ENCODE measurements at regions of chr22 and their contacts with region 1.

Region 1: GRCh38 chr22:17684245-17684644 is 45.7 kb downstream of the BCL2L13 start:
- DNase-seq: no peak
- ATAC-seq: no peak
- H3K4me3 ChIP-seq: no peak overlapping the region
- H3K27ac ChIP-seq: no peak overlapping the region
- H3K4me1 ChIP-seq: no peaks in the 10 kb centered on the region
- H3K27me3 ChIP-seq: no peaks in the 10 kb centered on the region
- CTCF ChIP-seq: no peak

Region 2: GRCh38 chr22:17559188-17559587 is 125.1 kb before region 1 on chr22:
- CTCF ChIA-PET with region 1: interaction called, 10 read pairs
- POLR2A ChIA-PET with region 1: no interaction called
- in situ Hi-C with region 1: no loop called
- intact Hi-C with region 1: no loop called
- DNase-seq: no peak
- ATAC-seq: no peak
- H3K4me3 ChIP-seq: no peak overlapping the region
- H3K27ac ChIP-seq: no peak overlapping the region
- H3K4me1 ChIP-seq: peaks cover 10% of the 10 kb centered on the region
- H3K27me3 ChIP-seq: no peaks in the 10 kb centered on the region
- CTCF ChIP-seq: no peak

Region 3: DNA sequence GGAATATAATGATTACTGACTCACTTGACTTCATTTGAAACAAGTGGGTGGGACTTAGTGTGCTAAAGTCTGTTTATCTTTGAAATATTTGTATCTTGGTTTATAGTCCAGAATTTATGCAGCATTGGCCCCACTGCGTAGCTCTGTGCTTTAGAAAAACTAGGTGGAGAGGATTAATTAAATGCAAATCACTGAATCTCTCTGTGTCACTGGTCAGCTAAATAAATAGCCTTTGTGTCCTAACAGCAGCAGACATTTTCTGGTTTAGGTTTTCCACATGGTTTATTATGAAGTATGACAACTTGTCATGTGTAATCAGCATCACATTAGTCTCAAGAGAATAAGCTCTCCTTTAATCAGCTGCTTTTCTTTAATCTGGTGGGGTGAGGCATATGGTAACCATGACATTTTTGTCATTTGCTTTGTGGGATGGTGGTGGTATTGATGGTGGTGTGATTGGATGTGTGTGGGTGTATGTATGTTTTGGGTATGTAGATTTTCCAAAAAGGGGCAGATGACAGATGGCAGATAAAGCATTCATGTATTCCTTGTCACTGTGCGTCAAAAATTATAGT is 11.7 kb before region 1 on chr22:
- CTCF ChIA-PET with region 1: interaction called, 10 read pairs
- POLR2A ChIA-PET with region 1: no interaction called
- in situ Hi-C with region 1: no loop called
- intact Hi-C with region 1: no loop called
- DNase-seq: no peak
- ATAC-seq: no peak
- H3K4me3 ChIP-seq: no peak overlapping the region
- H3K27ac ChIP-seq: no peak overlapping the region
- H3K4me1 ChIP-seq: 0 out of 2 replicates have a peak, but pooled peaks cover 5% of the 10 kb centered on the region
- H3K27me3 ChIP-seq: no peaks in the 10 kb centered on the region
- CTCF ChIP-seq: no peak

Measured in Panc1 (cell line).